Activated CD4-positive, alpha-beta memory T cell treated with anti-CD3 and anti-CD28 coated beads for 36 hours (primary cell): ENCODE measurements at regions of chr15 and their contacts with region 1.

Region 1: GRCh38 chr15:93030430-93031105 is 58.4 kb downstream of the RGMA start:
- DNase-seq: peak; percentile 78
- H3K4me3 Mint-ChIP-seq: no peak overlapping the region
- H3K27ac Mint-ChIP-seq: no peak overlapping the region
- H3K4me1 Mint-ChIP-seq: peaks cover 39% of the 10 kb centered on the region
- H3K27me3 Mint-ChIP-seq: no peaks in the 10 kb centered on the region

Region 2: DNA sequence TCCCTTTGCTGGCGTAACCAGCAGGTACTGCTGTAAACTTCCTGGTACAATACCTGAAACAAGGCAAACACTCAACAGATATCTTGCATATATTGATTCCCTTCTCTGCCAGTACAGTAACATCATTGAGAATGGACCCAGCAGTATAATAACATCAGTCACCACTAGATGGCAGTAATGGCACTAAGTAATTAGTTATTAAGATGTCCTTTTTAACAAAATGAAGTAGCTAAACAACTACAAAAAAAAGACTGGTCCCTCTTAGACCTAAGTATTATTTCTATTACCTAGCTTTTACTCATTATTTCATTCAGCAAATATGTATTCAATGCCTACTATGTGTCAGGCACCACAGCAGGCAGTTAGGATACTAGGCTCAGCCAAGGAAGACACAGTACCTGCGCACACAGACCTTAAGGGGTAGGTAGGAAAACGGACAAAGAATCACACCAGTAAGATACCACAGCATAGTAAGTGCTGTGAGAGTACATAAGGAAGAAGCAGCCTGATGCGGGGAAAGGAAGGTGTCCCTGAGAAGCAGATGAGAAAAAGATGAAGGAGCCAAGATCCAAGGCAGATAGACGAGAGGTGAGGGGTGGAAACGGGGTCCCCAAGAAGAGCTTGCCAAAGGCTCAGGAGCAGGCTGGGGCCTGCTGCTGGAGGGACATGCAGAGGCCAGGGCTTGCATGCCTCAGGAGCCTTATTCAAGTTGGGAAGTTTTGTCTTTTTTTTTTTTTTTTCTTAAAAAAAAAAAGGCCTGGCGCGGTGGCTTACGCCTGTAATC is 233.2 kb before region 1 on chr15:
- CTCF ChIA-PET with region 1: interaction called, 40 read pairs
- POLR2A ChIA-PET with region 1: no interaction called
- intact Hi-C with region 1: loop called (anchors 2 kb)
- DNase-seq: no peak
- H3K4me3 Mint-ChIP-seq: no peak overlapping the region
- H3K27ac Mint-ChIP-seq: peak overlapping the region; percentile 69
- H3K4me1 Mint-ChIP-seq: peaks cover 9% of the 10 kb centered on the region
- H3K27me3 Mint-ChIP-seq: no peaks in the 10 kb centered on the region

Region 3: GRCh38 chr15:92981333-92981732 is 49.2 kb before region 1 on chr15:
- CTCF ChIA-PET with region 1: interaction called, 10 read pairs
- POLR2A ChIA-PET with region 1: no interaction called
- intact Hi-C with region 1: no loop called
- DNase-seq: no peak
- H3K4me3 Mint-ChIP-seq: peak overlapping the region; percentile 12
- H3K27ac Mint-ChIP-seq: no peak overlapping the region
- H3K4me1 Mint-ChIP-seq: peaks cover 11% of the 10 kb centered on the region
- H3K27me3 Mint-ChIP-seq: no peaks in the 10 kb centered on the region

Region 4: DNA sequence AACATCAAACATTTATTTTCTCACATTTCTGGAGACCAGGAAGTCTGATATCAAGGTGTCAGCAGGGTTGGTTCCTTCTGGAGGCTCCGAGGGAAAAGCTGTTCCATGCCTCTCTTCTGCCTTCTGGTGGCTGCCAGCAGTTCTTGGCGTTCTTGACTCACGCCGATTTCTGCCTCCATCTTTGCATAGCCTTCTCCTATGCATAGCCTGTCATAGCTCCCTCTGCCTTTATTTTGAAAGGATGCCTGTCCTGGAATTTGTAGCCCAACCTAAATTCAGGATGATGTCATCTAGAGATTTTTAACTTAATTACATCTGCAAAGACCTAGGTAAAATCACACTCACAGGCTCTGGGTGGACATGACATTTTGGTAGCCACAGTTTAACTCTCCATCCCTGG is 12.0 kb before region 1 on chr15:
- CTCF ChIA-PET with region 1: interaction called, 45 read pairs
- POLR2A ChIA-PET with region 1: interaction called, 3 read pairs
- intact Hi-C with region 1: no loop called
- DNase-seq: no peak
- H3K4me3 Mint-ChIP-seq: no peak overlapping the region
- H3K27ac Mint-ChIP-seq: peak overlapping the region; percentile 83
- H3K4me1 Mint-ChIP-seq: peaks cover 68% of the 10 kb centered on the region
- H3K27me3 Mint-ChIP-seq: no peaks in the 10 kb centered on the region

Region 5: DNA sequence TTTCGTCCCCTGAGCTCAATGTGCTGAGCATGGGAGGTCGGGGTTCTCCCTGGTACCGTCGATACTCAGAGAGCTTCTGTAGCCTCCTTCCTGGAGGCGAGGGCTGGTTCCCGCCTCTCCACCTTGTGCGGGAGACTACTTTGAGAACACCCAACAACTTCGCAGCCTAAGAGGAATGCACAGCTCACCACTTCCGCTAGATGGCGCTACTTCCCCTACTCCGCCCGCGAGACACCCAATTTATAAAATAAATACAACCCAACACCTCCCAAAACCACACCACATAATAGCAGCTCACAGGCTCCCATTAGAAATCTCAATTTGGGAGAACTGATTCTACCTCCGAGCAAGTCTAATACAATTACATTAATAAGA is 57.2 kb after region 1 on chr15:
- CTCF ChIA-PET with region 1: interaction called, 29 read pairs
- POLR2A ChIA-PET with region 1: no interaction called
- intact Hi-C with region 1: loop called (anchors 5 kb)
- DNase-seq: peak; percentile 83
- H3K4me3 Mint-ChIP-seq: peak overlapping the region; percentile 67
- H3K27ac Mint-ChIP-seq: no peak overlapping the region
- H3K4me1 Mint-ChIP-seq: peaks cover 12% of the 10 kb centered on the region
- H3K27me3 Mint-ChIP-seq: peaks cover 54% of the 10 kb centered on the region

Region 6: DNA sequence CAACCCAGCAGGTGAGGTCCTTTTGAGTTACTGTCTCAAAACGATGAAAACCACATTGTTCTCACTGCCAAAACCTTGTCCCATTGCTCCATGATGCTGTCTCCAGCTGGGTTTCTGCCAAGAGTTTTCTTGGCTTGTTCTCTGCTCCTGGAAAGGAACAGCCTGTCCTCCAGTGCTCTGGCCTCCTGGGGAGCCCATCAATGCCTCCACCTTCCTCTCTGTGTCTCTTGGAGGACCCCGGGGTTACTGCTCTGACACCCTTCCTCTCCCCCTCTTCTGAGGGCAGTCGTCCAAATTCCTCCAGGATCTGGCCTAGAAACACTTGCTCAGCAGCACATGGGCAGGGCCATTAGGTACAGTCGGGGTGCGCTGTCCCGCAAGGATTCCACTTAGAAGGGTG is 122.4 kb after region 1 on chr15:
- CTCF ChIA-PET with region 1: no interaction called
- POLR2A ChIA-PET with region 1: no interaction called
- intact Hi-C with region 1: loop called (anchors 10 kb)
- DNase-seq: no peak
- H3K4me3 Mint-ChIP-seq: no peak overlapping the region
- H3K27ac Mint-ChIP-seq: no peak overlapping the region
- H3K4me1 Mint-ChIP-seq: peaks cover 20% of the 10 kb centered on the region
- H3K27me3 Mint-ChIP-seq: peaks cover 1% of the 10 kb centered on the region

Region 7: DNA sequence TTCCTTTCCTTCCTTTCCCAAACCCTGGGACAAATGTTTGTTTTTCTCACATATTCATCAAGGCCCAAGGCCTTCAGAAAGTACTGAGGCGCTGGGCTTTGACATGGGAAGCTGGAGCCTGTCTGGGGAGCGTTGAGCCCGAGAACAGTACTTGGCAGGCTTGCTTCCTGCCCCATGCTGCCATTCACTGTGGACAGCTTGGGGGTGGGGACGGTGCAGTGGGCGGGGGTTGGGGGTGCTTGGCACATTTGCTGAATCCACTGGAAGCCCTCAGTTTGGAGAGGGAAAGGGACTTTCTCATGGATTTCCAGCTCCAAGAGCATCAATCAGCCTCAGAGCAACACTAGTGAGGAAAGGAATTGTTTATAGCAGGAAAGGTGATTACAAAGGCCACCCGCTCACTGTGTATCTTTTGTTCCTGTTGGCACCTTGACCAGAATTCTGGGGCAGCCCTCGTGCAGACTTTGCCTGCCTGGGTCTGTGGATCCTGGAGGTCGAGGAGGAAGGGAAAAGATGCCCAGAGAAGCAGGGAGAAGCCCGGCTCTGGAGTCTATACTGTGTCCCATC is 258.2 kb after region 1 on chr15:
- CTCF ChIA-PET with region 1: no interaction called
- POLR2A ChIA-PET with region 1: no interaction called
- intact Hi-C with region 1: no loop called
- DNase-seq: no peak
- H3K4me3 Mint-ChIP-seq: no peak overlapping the region
- H3K27ac Mint-ChIP-seq: no peak overlapping the region
- H3K4me1 Mint-ChIP-seq: no peaks in the 10 kb centered on the region
- H3K27me3 Mint-ChIP-seq: peaks cover 16% of the 10 kb centered on the region

Region 8: GRCh38 chr15:94119923-94120775 is 1089.6 kb after region 1 on chr15:
- CTCF ChIA-PET with region 1: interaction called, 56 read pairs
- POLR2A ChIA-PET with region 1: no interaction called
- intact Hi-C with region 1: loop called (anchors 1 kb)
- DNase-seq: peak; percentile 65
- H3K4me3 Mint-ChIP-seq: no peak overlapping the region
- H3K27ac Mint-ChIP-seq: no peak overlapping the region
- H3K4me1 Mint-ChIP-seq: no peaks in the 10 kb centered on the region
- H3K27me3 Mint-ChIP-seq: no peaks in the 10 kb centered on the region